Thyroid gland (tissue), 4 donors: ENCODE measurements at regions of chr6 and their contacts with region 1.

Region 1: GRCh38 chr6:106997390-106998158 is 23.0 kb upstream of the CD24 start:
- DNase-seq: peak; percentile 44 to 73
- H3K4me3 ChIP-seq: no peak overlapping the region
- H3K27ac ChIP-seq: no peak overlapping the region
- H3K4me1 ChIP-seq: no peaks in the 10 kb centered on the region
- H3K27me3 ChIP-seq: no peaks in the 10 kb centered on the region
- CTCF ChIP-seq: peak; percentile 62 to 91 (median 76)
- POLR2A ChIP-seq: no peak

Region 2: GRCh38 chr6:106339334-106340029 is 658.1 kb before region 1 on chr6:
- intact Hi-C with region 1: loop called (anchors 10 kb)
- DNase-seq: peak; percentile 44 to 50
- H3K4me3 ChIP-seq: no peak overlapping the region
- H3K27ac ChIP-seq: no peak overlapping the region
- H3K4me1 ChIP-seq: no peaks in the 10 kb centered on the region
- H3K27me3 ChIP-seq: no peaks in the 10 kb centered on the region
- CTCF ChIP-seq: peak in 5 of 6 experiments; percentile 49 to 68 (median 59)
- POLR2A ChIP-seq: no peak

Region 3: GRCh38 chr6:106451439-106451838 is 546.1 kb before region 1 on chr6:
- intact Hi-C with region 1: loop called (anchors 10 kb)
- DNase-seq: no peak
- H3K4me3 ChIP-seq: no peak overlapping the region
- H3K27ac ChIP-seq: no peak overlapping the region
- H3K4me1 ChIP-seq: no peaks in the 10 kb centered on the region
- H3K27me3 ChIP-seq: no peaks in the 10 kb centered on the region
- CTCF ChIP-seq: no peak
- POLR2A ChIP-seq: no peak

Region 4: GRCh38 chr6:106658469-106658868 is 339.1 kb before region 1 on chr6:
- intact Hi-C with region 1: no loop called
- DNase-seq: no peak
- H3K4me3 ChIP-seq: no peak overlapping the region
- H3K27ac ChIP-seq: no peak overlapping the region
- H3K4me1 ChIP-seq: no peaks in the 10 kb centered on the region
- H3K27me3 ChIP-seq: no peaks in the 10 kb centered on the region
- CTCF ChIP-seq: no peak
- POLR2A ChIP-seq: no peak

Region 5: GRCh38 chr6:106959985-106960384 is 37.6 kb before region 1 on chr6:
- intact Hi-C with region 1: no loop called
- DNase-seq: no peak
- H3K4me3 ChIP-seq: no peak overlapping the region
- H3K27ac ChIP-seq: peak overlapping the region; percentile 82 to 94 (median 85)
- H3K4me1 ChIP-seq: peaks cover 16 to 31% of the 10 kb centered on the region in 2 donors
- H3K27me3 ChIP-seq: no peaks in the 10 kb centered on the region
- CTCF ChIP-seq: no peak
- POLR2A ChIP-seq: no peak